AG04449 (cell line): ENCODE measurements at regions of chr15 and their contacts with region 1.

Region 1: DNA sequence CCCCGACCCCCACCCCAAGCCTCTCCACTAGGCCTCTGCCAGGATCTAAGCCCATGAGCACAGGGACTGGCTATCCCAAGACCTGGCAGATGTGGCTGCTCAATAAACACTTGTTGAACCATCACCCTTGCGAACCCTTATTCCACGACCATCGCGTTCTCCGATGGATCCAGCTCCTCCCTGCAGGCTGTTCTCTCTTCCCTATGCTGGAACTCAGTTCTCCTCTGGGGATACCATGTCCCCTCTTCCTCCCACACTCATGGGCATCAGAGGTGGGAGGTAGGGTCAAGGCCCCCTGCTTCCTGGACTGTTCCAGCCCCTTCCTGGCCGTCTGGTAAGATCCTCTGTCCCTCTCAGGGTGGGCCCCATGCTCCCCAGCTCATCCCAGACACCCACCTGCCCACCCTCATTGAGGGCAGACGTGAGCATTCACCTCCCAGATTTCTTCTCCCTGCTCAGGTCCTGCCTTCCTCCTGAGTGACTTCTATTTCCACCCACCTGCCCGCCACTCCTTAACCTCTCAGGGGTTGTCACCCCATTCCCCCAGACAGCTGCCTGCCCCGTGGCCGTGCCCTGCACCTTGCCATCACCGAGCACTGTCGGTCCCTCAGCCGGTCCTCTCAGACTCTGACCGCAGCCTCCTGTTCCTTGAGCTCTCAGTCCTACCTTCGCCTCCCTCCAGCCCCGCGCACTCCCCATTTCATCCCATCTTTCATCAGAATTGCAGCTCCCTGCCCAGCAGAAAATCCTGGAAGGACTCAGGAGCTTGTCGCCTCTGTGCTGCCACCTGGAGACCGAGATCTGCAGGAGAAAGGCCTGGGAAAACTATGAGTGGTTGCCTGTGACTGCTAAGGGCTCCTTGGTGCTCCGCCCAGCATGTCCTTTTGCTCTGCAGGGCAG is 42.0 kb downstream of the PML start:
- DNase-seq: no peak
- H3K4me3 ChIP-seq: no peak overlapping the region
- CTCF ChIP-seq: peak; percentile 78

Region 2: GRCh38 chr15:73727330-73727976 is 309.1 kb before region 1 on chr15:
- CTCF ChIA-PET with region 1: no interaction called
- POLR2A ChIA-PET with region 1: no interaction called
- DNase-seq: peak; percentile 62
- H3K4me3 ChIP-seq: no peak overlapping the region
- CTCF ChIP-seq: no peak

Region 3: DNA sequence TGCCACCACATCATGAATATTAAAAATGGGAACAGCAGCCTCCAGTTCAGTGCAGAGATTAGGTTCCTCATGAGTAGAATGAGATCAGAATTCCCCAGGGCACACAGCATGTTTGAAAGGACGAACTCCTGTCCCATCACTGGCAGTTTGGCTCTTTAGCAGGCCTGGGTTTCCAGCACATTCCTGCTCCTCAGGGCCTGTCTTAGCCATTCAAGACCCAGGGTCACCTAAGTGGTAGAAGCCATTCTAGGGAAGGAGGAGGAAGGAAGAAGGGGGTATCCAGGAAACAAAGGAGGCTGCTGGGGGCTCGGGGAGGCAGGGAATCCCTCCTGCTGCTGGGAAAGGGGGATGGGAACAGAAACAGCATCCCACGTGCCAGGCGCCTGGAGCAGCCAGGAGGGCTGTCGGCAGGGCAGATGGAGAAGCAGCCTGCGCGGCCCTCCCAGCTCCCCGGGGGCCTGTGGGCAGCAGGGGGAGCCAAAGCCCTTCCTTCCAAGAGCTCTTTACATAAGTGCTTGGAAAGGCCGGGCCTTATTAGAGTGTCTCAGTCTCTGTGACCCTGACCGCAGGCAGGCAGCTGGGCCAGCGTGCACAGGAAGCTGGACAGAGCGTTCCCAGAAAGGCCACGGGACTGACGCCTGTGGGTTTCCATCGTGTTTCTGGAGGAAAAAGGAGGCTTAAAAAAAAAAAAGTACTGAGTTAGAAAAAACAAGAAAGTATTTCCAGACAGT is 85.5 kb before region 1 on chr15:
- CTCF ChIA-PET with region 1: interaction called, 11 read pairs
- POLR2A ChIA-PET with region 1: no interaction called
- DNase-seq: peak; percentile 91
- H3K4me3 ChIP-seq: no peak overlapping the region
- CTCF ChIP-seq: peak; percentile 93

Region 4: DNA sequence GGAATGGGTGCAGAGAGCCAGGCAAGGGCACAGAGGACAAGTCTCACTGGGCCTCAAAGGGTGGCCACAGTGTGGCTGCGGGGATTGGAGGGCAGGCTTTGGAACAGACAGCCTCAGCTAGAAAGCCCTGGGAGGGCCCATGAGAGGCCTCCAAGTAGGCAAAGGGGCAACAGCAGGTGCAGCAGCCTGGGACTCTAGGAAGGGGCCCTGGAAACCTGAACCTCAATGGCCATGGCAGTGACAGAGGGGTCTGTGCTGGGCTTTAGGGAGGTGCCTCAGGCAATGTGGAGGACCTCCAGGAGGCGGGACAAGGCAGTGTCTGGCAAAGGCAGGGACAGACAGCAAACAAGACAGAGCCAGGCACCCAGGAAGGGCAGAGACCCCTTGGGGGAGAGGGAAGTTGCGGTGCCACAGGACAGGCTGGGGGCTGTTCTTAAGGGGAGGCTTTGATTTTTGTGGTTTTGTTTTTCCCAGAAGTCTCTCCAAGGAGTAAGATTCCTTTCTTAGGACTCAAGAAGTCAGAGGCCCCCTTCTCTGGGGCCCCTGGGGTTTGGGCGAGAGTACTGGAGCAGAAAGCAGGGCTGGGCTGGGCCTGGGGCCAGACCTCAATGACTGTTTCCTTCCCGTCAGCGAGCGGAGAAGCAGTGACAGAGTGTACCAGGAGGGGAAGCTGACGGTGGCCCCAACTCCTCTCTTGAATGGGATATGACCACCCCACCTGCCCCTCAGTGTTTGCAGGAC is 54.1 kb before region 1 on chr15:
- CTCF ChIA-PET with region 1: interaction called, 544 read pairs
- POLR2A ChIA-PET with region 1: interaction called, 3 read pairs
- DNase-seq: peak; percentile 81
- H3K4me3 ChIP-seq: peak overlapping the region; percentile 20
- CTCF ChIP-seq: no peak

Region 5: DNA sequence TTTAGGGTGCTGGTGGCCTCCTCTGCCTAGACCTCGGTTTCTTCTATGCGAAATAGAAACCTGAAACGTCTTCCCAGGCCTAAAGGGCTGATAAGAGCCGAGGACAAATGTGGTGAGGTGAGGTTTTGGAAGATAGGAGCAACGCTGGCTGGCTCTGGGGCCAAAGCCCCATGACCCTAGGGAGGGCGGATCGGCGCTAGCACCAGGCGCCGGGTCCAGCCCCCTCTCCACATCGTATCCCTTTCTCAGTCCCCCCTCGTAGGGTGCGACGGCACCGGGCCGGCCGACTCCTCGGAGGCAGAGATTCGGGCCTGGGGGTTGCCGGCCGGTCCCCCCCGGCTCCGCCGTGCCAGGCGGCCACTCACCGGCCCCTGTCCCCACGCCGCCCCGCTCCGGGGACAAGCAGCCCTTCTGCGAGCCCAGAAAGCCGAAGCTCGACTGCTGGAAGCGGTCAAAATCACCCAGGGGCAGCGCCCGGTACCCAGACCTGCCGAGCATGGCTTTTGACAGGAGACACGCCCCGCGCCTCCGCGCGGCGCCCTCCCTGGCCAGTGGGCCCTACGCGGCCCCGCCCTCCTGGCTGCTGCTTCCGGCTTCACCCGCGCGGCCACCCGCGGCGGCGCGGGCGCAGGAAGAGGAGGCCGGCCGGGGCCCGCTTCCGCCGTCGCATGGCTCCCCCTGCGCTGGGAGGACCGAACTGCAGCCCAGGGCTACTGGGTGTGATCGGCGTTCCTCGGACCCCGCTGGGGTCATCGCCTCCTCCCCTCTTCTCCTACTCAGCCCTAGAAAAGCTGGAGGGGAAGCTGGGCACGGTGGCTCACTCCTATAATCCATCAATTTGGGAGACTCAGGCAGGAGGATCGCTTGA is 44.6 kb before region 1 on chr15 and contains the start of gene STOML1:
- CTCF ChIA-PET with region 1: interaction called, 126 read pairs
- POLR2A ChIA-PET with region 1: interaction called, 10 read pairs
- DNase-seq: no peak
- H3K4me3 ChIP-seq: peak within 1 kb of the TSS; percentile 71
- CTCF ChIP-seq: peak; percentile 85

Region 6: GRCh38 chr15:74019734-74020133 is 16.8 kb before region 1 on chr15:
- CTCF ChIA-PET with region 1: interaction called, 87 read pairs
- POLR2A ChIA-PET with region 1: no interaction called
- DNase-seq: no peak
- H3K4me3 ChIP-seq: no peak overlapping the region
- CTCF ChIP-seq: no peak

Region 7: GRCh38 chr15:74025436-74025835 is 11.1 kb before region 1 on chr15:
- CTCF ChIA-PET with region 1: interaction called, 87 read pairs
- POLR2A ChIA-PET with region 1: interaction called, 3 read pairs
- DNase-seq: no peak
- H3K4me3 ChIP-seq: no peak overlapping the region
- CTCF ChIP-seq: no peak

Region 8: DNA sequence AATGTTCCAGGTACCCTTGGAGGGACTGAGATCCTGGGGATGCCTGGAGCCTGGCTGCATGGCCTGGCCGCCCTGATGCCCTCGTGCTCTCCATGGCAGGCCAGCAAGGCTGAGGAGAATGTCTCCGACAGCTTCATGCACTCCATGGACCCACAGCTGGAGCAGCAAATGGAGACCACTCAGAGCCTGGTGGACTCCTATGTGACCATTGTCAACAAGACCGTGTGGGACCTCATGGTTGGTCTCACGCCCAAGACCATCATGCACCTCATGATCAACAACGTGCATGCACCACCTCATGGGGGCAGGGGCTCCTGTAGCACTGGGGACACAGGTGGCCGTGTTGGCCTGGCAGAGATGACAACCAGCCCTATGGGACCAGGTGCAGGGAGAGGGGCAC is 26.1 kb after region 1 on chr15:
- CTCF ChIA-PET with region 1: no interaction called
- POLR2A ChIA-PET with region 1: no interaction called
- DNase-seq: no peak
- H3K4me3 ChIP-seq: no peak overlapping the region
- CTCF ChIP-seq: no peak